ENCODE measurements at regions of chr6 and their contacts with region 1.

Region 1: DNA sequence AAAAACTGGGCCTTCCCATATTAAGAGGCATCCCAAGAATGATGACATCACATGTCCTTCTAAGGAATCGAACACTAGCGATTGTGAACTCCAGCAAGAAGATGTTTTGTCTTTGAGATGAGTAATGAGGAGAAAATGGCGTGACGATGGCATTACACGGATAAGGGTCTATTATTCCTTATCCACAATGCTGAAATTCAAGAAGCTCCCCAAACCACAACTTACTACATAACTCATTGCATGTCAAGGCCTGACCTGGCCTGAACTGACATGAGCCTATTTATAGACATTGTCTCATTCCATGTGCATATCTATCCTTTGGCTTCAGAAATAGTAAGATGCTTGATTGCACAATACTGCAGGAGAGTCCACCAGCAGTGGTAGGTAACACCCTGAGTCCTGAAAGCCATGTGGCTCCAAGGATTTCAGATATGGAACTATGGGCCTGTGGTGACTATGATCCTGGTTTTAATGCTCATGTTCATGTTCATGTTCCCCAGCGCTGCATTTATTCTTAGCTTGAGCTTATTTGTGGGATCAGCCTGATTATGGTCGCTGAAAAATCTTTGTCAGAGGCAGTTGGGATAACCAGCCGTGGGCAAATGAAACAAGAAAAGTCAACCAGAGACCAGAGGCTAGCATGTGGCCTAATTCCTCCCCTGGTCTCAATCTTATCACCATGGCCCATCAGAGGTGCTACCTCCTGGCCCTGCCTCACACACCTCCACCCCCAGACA is 183.2 kb upstream of the JARID2 start:
- H3K4me3 Mint-ChIP-seq: no peak overlapping the region
- H3K27ac Mint-ChIP-seq: peak overlapping the region; percentile 58
- H3K4me1 Mint-ChIP-seq: peaks cover 62% of the 10 kb centered on the region
- H3K27me3 Mint-ChIP-seq: no peaks in the 10 kb centered on the region

Region 2: GRCh38 chr6:15017261-15017660 is 45.4 kb before region 1 on chr6:
- intact Hi-C with region 1: loop called (anchors 10 kb)
- H3K4me3 Mint-ChIP-seq: peak overlapping the region; percentile 52
- H3K27ac Mint-ChIP-seq: peak overlapping the region; percentile 74
- H3K4me1 Mint-ChIP-seq: peaks cover 49% of the 10 kb centered on the region
- H3K27me3 Mint-ChIP-seq: no peaks in the 10 kb centered on the region

Region 3: DNA sequence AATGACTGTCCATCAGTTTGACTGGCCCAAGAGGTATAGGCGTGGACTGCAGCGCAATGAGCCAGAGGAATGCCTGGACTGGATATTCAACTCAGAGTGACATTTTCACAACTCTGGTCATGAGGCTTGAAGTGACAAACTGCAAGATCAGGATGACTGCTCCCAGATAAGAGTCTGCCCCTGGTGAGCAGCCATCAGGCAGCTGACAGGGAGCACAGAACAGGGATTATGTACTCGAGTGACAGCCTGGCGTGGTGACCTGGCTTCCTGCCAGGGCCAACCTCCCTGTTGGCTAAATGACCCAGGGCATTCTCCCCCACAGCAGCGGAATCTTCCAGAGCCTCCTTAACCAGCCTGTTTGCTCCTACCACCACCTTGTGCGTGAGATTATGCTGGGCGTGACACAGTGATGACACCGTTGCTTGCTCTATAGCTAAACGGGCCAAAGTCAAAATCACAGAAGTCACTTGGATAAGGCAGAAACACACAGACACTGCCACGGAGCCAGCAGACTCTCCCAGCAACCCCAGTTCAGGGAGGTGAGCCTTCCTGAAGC is 25.9 kb before region 1 on chr6:
- intact Hi-C with region 1: no loop called
- H3K4me3 Mint-ChIP-seq: no peak overlapping the region
- H3K27ac Mint-ChIP-seq: no peak overlapping the region
- H3K4me1 Mint-ChIP-seq: peaks cover 16% of the 10 kb centered on the region
- H3K27me3 Mint-ChIP-seq: no peaks in the 10 kb centered on the region

Region 4: GRCh38 chr6:15245361-15246216 is 182.9 kb after region 1 on chr6 and contains the start of gene JARID2:
- intact Hi-C with region 1: loop called (anchors 5 kb)
- H3K4me3 Mint-ChIP-seq: peak within 1 kb of the TSS; percentile 85
- H3K27ac Mint-ChIP-seq: peak within 1 kb of the TSS; percentile 92
- H3K4me1 Mint-ChIP-seq: peaks cover 26% of the 10 kb centered on the region
- H3K27me3 Mint-ChIP-seq: no peaks in the 10 kb centered on the region